ENCODE measurements at regions of chr10 and their contacts with region 1.

Region 1: DNA sequence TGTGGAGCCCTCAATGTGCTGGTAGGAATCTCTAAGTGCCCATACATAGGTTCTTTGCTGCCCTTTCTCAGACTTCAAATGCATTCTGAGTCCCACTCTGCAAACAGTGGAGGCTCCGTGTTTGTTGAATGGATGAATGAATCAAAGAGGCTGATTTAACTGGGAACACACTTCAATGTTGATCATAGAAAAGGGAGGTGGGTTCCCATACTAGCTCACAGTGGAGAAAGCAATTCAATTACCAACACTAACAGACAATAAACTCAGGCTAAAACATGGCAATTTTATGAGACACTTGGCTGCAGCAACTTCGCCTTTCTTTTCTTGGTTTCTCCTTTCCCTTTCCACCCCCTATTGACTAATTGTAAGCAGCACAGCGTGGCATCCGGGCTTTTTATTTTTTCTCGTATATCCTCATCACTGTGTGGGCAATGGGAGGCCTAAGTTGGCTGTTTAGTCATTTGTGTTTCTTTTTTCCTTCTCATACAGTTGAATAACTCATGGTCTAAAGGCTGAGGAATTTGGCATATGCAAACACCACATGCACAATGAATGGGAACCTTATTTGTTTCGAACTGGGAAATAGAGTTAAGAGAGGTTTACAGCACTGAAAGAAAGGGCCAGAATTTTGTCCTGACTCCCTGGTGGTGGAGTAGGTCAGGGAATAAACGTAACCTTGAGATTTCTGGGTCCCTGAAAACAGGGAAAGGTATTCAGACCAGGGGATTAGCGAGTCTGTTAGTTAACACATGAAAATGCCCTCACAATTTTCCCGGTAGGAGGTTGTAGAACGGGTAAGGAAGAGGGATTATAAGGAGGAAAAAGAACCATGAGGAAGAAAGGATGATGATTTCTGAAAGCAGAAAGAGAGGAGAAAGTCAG is 858.5 kb downstream of the KCNMA1 start:
- DNase-seq: no peak
- ATAC-seq: no peak
- H3K4me3 ChIP-seq: no peak overlapping the region
- H3K27ac ChIP-seq: peak overlapping the region in 2 of 12 donors; percentile 21 to 55
- H3K4me1 ChIP-seq: peaks cover 0 to 24% (median 0%) of the 10 kb centered on the region in 12 donors
- H3K27me3 ChIP-seq: no peaks in the 10 kb centered on the region
- CTCF ChIP-seq: peak in 2 of 12 donors; percentile 14 to 27
- POLR2A ChIP-seq: no peak

Region 2: GRCh38 chr10:76432274-76433012 is 346.7 kb before region 1 on chr10:
- intact Hi-C with region 1: loop called in 2 of 10 experiments (anchors 5 to 10 kb)
- DNase-seq: peak in 4 of 5 donors; percentile 26 to 63 (median 48)
- ATAC-seq: peak; percentile 22 to 49 (median 38)
- H3K4me3 ChIP-seq: no peak overlapping the region
- H3K27ac ChIP-seq: peak overlapping the region; percentile 68 to 91 (median 80)
- H3K4me1 ChIP-seq: peaks cover 0 to 82% (median 62%) of the 10 kb centered on the region in 12 donors
- H3K27me3 ChIP-seq: no peaks in the 10 kb centered on the region
- CTCF ChIP-seq: no peak
- POLR2A ChIP-seq: no peak

Region 3: DNA sequence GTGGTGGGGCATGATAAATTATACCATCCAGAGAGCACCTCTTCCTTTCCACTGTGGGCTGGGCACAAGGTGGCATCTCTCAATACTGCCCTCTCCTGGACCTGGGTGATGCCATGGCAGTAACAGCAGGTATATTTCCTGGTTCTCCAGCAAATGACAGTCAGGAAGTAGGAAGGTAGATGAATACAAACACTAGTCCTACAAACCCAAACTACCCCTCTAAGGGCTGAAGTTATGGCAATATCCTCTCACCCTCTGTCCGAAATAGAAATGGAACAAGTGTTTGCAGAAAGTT is 146.4 kb before region 1 on chr10:
- intact Hi-C with region 1: loop called in 1 of 10 experiments (anchors 10 kb)
- DNase-seq: no peak
- ATAC-seq: peak; percentile 41 to 70 (median 56)
- H3K4me3 ChIP-seq: no peak overlapping the region
- H3K27ac ChIP-seq: no peak overlapping the region
- H3K4me1 ChIP-seq: peaks cover 0 to 16% (median 0%) of the 10 kb centered on the region in 12 donors
- H3K27me3 ChIP-seq: no peaks in the 10 kb centered on the region
- CTCF ChIP-seq: peak in 7 of 12 donors; percentile 7 to 30 (median 29)
- POLR2A ChIP-seq: no peak

Region 4: GRCh38 chr10:76882245-76882644 is 103.1 kb after region 1 on chr10:
- intact Hi-C with region 1: loop called in 3 of 10 experiments (anchors 5 to 10 kb)
- DNase-seq: no peak
- ATAC-seq: peak in 1 of 4 donors; percentile 37
- H3K4me3 ChIP-seq: no peak overlapping the region
- H3K27ac ChIP-seq: no peak overlapping the region
- H3K4me1 ChIP-seq: peaks cover 0 to 45% (median 9%) of the 10 kb centered on the region in 12 donors
- H3K27me3 ChIP-seq: peaks cover 0 to 5% (median 0%) of the 10 kb centered on the region in 9 donors
- CTCF ChIP-seq: no peak
- POLR2A ChIP-seq: no peak

Region 5: DNA sequence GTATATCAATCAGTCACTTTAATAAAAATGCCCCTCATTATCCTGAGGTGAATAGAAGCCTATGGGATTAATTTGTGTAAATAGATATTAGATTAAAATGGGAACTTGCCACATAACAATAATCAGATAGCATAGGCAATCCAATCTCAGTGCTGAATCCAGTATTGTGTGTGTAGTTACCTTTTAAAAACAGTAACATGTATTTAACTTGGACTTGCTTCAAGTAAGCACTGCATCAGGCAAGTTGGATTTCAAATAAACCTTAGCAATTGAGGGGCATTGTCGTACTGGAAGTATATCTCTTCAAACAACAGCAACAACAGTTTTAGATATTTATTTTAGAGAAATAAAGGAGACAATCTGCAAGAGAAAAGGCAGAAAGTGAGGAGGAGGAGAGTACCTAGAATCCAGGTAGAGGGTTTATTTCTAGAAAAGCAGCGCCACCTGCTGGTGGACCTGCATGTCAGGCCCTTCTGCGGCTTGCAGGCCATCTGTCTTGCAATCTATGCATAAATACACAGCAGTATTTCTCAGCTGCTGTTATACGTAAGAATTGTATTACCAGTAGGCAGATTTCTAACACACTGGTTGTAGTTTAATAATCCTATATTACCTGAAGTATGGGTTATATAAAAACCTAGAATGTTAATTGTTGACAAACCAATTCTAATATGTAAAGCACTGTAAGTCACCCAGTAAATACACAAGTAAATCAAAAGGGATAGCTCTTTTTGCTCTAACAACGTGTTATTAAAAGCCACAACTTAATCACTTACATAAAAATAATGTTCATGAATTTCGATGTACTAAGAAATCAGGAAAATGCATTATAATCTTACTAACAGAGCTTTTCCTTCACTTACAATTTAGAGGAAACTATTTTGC is 205.6 kb after region 1 on chr10:
- intact Hi-C with region 1: loop called in 1 of 10 experiments (anchors 5 kb)
- DNase-seq: peak; percentile 57 to 76 (median 65)
- ATAC-seq: peak in 3 of 4 donors; percentile 72 to 89 (median 80)
- H3K4me3 ChIP-seq: no peak overlapping the region
- H3K27ac ChIP-seq: no peak overlapping the region
- H3K4me1 ChIP-seq: no peaks in the 10 kb centered on the region
- H3K27me3 ChIP-seq: no peaks in the 10 kb centered on the region
- CTCF ChIP-seq: peak; percentile 80 to 97 (median 92)
- POLR2A ChIP-seq: no peak

Measured in heart left ventricle (tissue), 16 donors.